B cell (primary cell): ENCODE measurements at regions of chr7 and their contacts with region 1.

Region 1: GRCh38 chr7:50349963-50350944 is 45.7 kb downstream of the IKZF1 start:
- DNase-seq: peak; percentile 40
- ATAC-seq: peak; percentile 42
- H3K4me3 ChIP-seq: peak overlapping the region in 2 of 5 experiments; percentile 3 to 17
- H3K4me3 Mint-ChIP-seq: peak overlapping the region; percentile 73
- H3K27ac ChIP-seq: peak overlapping the region; percentile 31 to 90
- H3K27ac Mint-ChIP-seq: peak overlapping the region; percentile 88
- H3K4me1 ChIP-seq: peaks cover 49 to 86% of the 10 kb centered on the region in 2 donors
- H3K4me1 Mint-ChIP-seq: peaks cover 90% of the 10 kb centered on the region
- H3K27me3 ChIP-seq: no peaks in the 10 kb centered on the region
- H3K27me3 Mint-ChIP-seq: no peaks in the 10 kb centered on the region
- CTCF ChIP-seq: no peak

Region 2: DNA sequence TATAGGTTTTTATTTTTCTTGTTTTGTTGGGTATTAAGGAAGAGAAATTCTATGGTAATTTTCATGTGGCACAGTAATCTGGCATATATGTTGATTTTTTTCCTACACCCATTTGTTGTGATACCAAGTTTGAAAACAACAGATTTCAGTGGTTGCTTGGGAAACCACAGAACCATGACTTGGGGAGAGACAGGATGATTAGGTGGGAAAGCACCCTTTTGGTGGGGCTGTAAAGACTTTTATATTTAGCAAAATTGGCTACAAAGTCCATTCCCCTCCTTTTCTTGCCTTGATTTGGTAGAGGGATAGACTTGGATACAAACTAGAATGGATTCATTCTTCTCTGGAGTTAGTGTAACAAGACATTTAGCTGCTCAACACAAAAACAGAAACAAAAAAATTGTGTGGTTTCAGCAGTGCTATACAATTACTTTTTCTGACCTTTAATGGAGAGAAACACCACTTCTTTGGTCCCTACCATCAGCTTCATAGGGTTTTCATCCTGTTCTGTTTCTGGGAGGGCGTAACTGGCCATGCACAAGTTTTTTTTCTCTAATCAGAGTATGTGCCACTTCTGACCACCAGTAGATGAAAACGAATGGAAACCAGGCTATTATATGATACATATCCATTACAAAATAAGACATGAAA is 47.2 kb after region 1 on chr7:
- CTCF ChIA-PET with region 1: interaction called, 3 read pairs
- POLR2A ChIA-PET with region 1: no interaction called
- intact Hi-C with region 1: loop called (anchors 5 kb)
- DNase-seq: peak; percentile 60
- ATAC-seq: no peak
- H3K4me3 ChIP-seq: peak overlapping the region in 1 of 5 experiments; percentile 23
- H3K4me3 Mint-ChIP-seq: peak overlapping the region; percentile 75
- H3K27ac ChIP-seq: peak overlapping the region; percentile 86 to 94
- H3K27ac Mint-ChIP-seq: peak overlapping the region; percentile 97
- H3K4me1 ChIP-seq: peaks cover 65 to 70% of the 10 kb centered on the region in 2 donors
- H3K4me1 Mint-ChIP-seq: peaks cover 77% of the 10 kb centered on the region
- H3K27me3 ChIP-seq: no peaks in the 10 kb centered on the region
- H3K27me3 Mint-ChIP-seq: no peaks in the 10 kb centered on the region
- CTCF ChIP-seq: no peak

Region 3: GRCh38 chr7:50632561-50633413 is 282.5 kb after region 1 on chr7:
- CTCF ChIA-PET with region 1: no interaction called
- POLR2A ChIA-PET with region 1: no interaction called
- intact Hi-C with region 1: no loop called
- DNase-seq: peak; percentile 69
- ATAC-seq: peak; percentile 73
- H3K4me3 ChIP-seq: no peak overlapping the region
- H3K4me3 Mint-ChIP-seq: no peak overlapping the region
- H3K27ac ChIP-seq: no peak overlapping the region
- H3K27ac Mint-ChIP-seq: no peak overlapping the region
- H3K4me1 ChIP-seq: peaks cover 0 to 6% of the 10 kb centered on the region in 2 donors
- H3K4me1 Mint-ChIP-seq: peaks cover 12% of the 10 kb centered on the region
- H3K27me3 ChIP-seq: peaks cover 0 to 9% (median 3%) of the 10 kb centered on the region in 4 experiments
- H3K27me3 Mint-ChIP-seq: peaks cover 36% of the 10 kb centered on the region
- CTCF ChIP-seq: peak; percentile 96